ENCODE measurements at regions of chr10 and their contacts with region 1.

Region 1: GRCh38 chr10:72331601-72332422 is 22.9 kb downstream of the DNAJB12 start:
- DNase-seq: peak; percentile 74 to 82 (median 77)
- H3K4me3 ChIP-seq: no peak overlapping the region
- H3K27ac ChIP-seq: peak overlapping the region; percentile 77 to 99
- H3K4me1 ChIP-seq: peaks cover 53% of the 10 kb centered on the region
- H3K27me3 ChIP-seq: no peaks in the 10 kb centered on the region
- CTCF ChIP-seq: peak; percentile 12 to 27 (median 16)
- EP300 ChIP-seq: no peak
- POLR2A ChIP-seq: no peak

Region 2: DNA sequence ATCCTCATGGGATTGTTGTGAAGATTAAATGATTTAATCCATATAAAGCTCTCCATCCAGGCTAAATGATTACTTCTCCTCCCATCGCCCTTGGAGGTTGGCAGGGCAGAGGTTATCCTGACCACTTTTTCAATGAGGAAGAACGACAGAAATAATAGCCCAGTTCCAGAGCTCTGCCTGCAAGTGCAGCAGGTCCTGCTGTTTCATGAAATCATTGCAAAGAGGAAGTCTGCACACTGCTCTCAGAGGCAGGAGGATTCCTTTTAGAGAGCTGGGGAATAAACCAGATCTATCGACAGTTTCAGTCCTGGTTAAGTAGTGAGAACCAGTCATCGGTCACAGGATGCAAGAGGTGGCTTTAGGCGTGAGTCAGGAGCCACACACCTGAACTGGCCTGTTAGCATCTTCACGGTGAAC is 960.1 kb before region 1 on chr10:
- intact Hi-C with region 1: no loop called
- DNase-seq: no peak
- H3K4me3 ChIP-seq: no peak overlapping the region
- H3K27ac ChIP-seq: no peak overlapping the region
- H3K4me1 ChIP-seq: peaks cover under 1% of the 10 kb centered on the region
- H3K27me3 ChIP-seq: no peaks in the 10 kb centered on the region
- CTCF ChIP-seq: no peak
- EP300 ChIP-seq: no peak
- POLR2A ChIP-seq: no peak

Region 3: GRCh38 chr10:71893920-71894319 is 437.9 kb before region 1 on chr10:
- intact Hi-C with region 1: loop called in 1 of 4 experiments (anchors 10 kb)
- DNase-seq: peak in 1 of 5 donors; percentile 20
- H3K4me3 ChIP-seq: no peak overlapping the region
- H3K27ac ChIP-seq: no peak overlapping the region
- H3K4me1 ChIP-seq: peaks cover 7% of the 10 kb centered on the region
- H3K27me3 ChIP-seq: no peaks in the 10 kb centered on the region
- CTCF ChIP-seq: no peak
- EP300 ChIP-seq: no peak
- POLR2A ChIP-seq: no peak

Region 4: GRCh38 chr10:72048450-72049124 is 283.2 kb before region 1 on chr10:
- intact Hi-C with region 1: loop called (anchors 5 kb)
- DNase-seq: peak; percentile 90 to 97 (median 96)
- H3K4me3 ChIP-seq: no peak overlapping the region
- H3K27ac ChIP-seq: no peak overlapping the region
- H3K4me1 ChIP-seq: peaks cover 5% of the 10 kb centered on the region
- H3K27me3 ChIP-seq: no peaks in the 10 kb centered on the region
- CTCF ChIP-seq: peak; percentile 96 to 100 (median 100)
- EP300 ChIP-seq: no peak
- POLR2A ChIP-seq: peak; percentile 33

Region 5: GRCh38 chr10:72133517-72133916 is 198.3 kb before region 1 on chr10:
- intact Hi-C with region 1: loop called in 1 of 4 experiments (anchors 10 kb)
- DNase-seq: no peak
- H3K4me3 ChIP-seq: no peak overlapping the region
- H3K27ac ChIP-seq: no peak overlapping the region
- H3K4me1 ChIP-seq: no peaks in the 10 kb centered on the region
- H3K27me3 ChIP-seq: no peaks in the 10 kb centered on the region
- CTCF ChIP-seq: no peak
- EP300 ChIP-seq: no peak
- POLR2A ChIP-seq: no peak

Region 6: GRCh38 chr10:72204296-72204695 is 127.5 kb before region 1 on chr10:
- intact Hi-C with region 1: no loop called
- DNase-seq: no peak
- H3K4me3 ChIP-seq: no peak overlapping the region
- H3K27ac ChIP-seq: no peak overlapping the region
- H3K4me1 ChIP-seq: no peaks in the 10 kb centered on the region
- H3K27me3 ChIP-seq: no peaks in the 10 kb centered on the region
- CTCF ChIP-seq: no peak
- EP300 ChIP-seq: no peak
- POLR2A ChIP-seq: no peak

Region 7: GRCh38 chr10:72248468-72249151 is 83.2 kb before region 1 on chr10:
- intact Hi-C with region 1: loop called in 2 of 4 experiments (anchors 10 kb)
- DNase-seq: peak; percentile 76 to 88 (median 85)
- H3K4me3 ChIP-seq: peak overlapping the region; percentile 26
- H3K27ac ChIP-seq: peak overlapping the region; percentile 86 to 88
- H3K4me1 ChIP-seq: peaks cover 45% of the 10 kb centered on the region
- H3K27me3 ChIP-seq: no peaks in the 10 kb centered on the region
- CTCF ChIP-seq: peak in 1 of 3 donors; percentile 5
- EP300 ChIP-seq: peak; percentile 67
- POLR2A ChIP-seq: peak; percentile 54

Region 8: GRCh38 chr10:72297968-72298773 is 33.6 kb before region 1 on chr10:
- intact Hi-C with region 1: no loop called
- DNase-seq: peak; percentile 98 to 99 (median 98)
- H3K4me3 ChIP-seq: peak overlapping the region; percentile 48
- H3K27ac ChIP-seq: peak overlapping the region; percentile 92 to 95
- H3K4me1 ChIP-seq: peaks cover 4% of the 10 kb centered on the region
- H3K27me3 ChIP-seq: no peaks in the 10 kb centered on the region
- CTCF ChIP-seq: no peak
- EP300 ChIP-seq: no peak
- POLR2A ChIP-seq: peak; percentile 89

Region 9: GRCh38 chr10:72308320-72308987 is 23.4 kb before region 1 on chr10:
- intact Hi-C with region 1: no loop called
- DNase-seq: peak; percentile 81 to 93 (median 87)
- H3K4me3 ChIP-seq: no peak overlapping the region
- H3K27ac ChIP-seq: peak overlapping the region; percentile 77 to 81
- H3K4me1 ChIP-seq: peaks cover 27% of the 10 kb centered on the region
- H3K27me3 ChIP-seq: no peaks in the 10 kb centered on the region
- CTCF ChIP-seq: no peak
- EP300 ChIP-seq: no peak
- POLR2A ChIP-seq: no peak